BJ (cell line): ENCODE measurements at regions of chr16 and their contacts with region 1.

Region 1: GRCh38 chr16:85369741-85370528 is 243.2 kb upstream of the GSE1 start:
- DNase-seq: no peak
- H3K4me3 ChIP-seq: no peak overlapping the region
- H3K27me3 ChIP-seq: no peaks in the 10 kb centered on the region
- CTCF ChIP-seq: peak; percentile 83

Region 2: DNA sequence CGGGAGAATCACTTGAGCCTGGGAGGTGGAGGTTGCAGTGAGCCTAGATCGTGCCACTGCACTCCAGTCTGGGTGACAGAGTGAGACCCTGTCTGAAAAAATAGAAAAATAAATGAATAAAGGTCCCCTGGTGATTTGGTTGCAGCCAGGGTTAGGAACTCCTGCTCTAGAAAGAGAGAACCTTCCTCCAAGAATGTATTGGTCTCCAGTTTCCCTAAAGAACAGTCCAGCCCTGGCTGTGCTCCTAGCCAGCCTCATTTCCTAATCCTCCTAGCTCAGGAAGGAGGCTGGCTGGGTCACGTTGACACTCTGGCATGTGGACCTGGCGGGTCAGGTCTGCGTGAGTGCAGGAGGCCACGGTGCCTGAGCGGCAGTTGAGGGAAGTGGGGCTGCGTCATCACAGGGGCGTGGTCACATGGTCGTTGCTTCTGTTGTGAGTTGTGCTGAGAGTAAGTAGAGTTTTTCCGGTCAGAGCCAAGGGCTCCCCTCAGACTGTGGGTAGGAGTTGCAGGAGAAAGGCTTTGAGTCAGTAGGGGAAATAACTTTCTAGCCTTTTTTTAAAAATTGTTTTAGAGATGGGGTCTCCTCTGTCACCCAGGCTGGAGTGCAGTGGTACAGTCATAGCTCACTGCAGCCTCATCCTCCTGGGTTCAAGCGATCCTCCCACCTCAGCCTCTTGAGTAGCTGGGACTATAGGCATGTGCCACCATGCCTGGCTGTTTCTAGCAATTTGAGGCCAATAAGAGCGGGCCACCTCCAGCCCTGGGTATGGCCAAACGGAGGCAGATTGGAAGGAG is 63.7 kb before region 1 on chr16:
- CTCF ChIA-PET with region 1: no interaction called
- POLR2A ChIA-PET with region 1: no interaction called
- DNase-seq: peak; percentile 39
- H3K4me3 ChIP-seq: no peak overlapping the region
- H3K27me3 ChIP-seq: no peaks in the 10 kb centered on the region
- CTCF ChIP-seq: no peak

Region 3: GRCh38 chr16:85354686-85355514 is 15.0 kb before region 1 on chr16:
- CTCF ChIA-PET with region 1: interaction called, 17 read pairs
- POLR2A ChIA-PET with region 1: no interaction called
- DNase-seq: peak; percentile 17
- H3K4me3 ChIP-seq: no peak overlapping the region
- H3K27me3 ChIP-seq: no peaks in the 10 kb centered on the region
- CTCF ChIP-seq: no peak